H1 (cell line): ENCODE measurements at regions of chr15 and their contacts with region 1.

Region 1: DNA sequence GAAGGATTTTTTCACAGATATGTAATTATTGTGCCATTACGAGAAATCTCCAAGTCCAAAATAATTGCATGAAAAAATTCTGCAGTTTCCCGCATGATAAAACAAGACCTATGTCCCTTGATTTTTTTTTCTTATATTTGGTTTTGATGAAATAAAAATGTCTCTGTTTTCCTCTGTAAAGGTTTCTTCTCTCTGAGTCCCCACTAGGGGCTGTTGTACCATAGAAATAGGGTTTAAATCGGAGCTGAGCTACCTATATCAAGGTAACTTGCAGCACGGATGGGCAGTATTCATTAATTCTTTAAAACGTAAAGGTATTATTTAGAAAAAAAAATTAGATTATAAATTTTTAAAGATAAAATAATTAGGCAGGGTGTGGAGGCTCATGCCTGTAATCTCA is 66.6 kb upstream of the IGF1R start:
- DNase-seq: no peak
- H3K4me3 ChIP-seq: no peak overlapping the region
- H3K27ac ChIP-seq: no peak overlapping the region
- H3K4me1 ChIP-seq: peaks cover 0 to 5% (median 2%) of the 10 kb centered on the region in 4 experiments; a peak in 4 of 7 replicates
- H3K27me3 ChIP-seq: no peaks in the 10 kb centered on the region
- CTCF ChIP-seq: peak in 2 of 3 experiments; percentile 23 to 34; a peak in 2 of 4 replicates
- EP300 ChIP-seq: no peak
- POLR2A ChIP-seq: no peak
- RAD21 ChIP-seq: peak; percentile 45 to 52

Region 2: DNA sequence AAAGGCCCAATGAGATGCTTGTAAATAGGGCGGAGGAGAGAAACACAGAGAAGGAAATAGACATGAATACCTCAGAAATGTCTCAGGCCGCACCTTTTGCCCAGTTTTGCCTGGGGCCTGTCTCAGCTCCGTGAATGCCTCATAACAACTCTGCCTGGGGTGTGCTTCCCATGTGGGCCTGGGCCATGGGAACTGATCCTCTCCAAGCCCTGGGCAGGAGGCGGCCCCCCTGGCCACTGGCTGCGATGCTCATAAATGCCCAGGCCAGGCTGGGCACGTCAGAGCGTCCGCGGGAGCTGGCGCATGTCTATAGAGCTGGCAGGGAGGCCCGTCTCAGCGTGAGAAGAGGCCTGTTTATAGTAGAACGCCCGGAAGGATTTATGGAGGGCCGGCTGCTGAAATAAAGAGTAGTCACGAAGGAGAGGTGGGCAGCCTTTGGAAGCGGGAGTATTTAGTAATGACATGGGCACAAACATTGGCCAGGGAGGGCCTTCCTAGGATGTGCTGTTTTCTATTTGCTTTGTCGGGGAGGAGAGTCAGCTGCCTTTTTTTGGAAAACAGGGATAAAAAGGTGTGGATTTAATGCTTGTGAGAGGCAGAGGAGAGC is 19.3 kb before region 1 on chr15:
- CTCF ChIA-PET with region 1: interaction called, 32 read pairs
- POLR2A ChIA-PET with region 1: no interaction called
- DNase-seq: no peak
- H3K4me3 ChIP-seq: no peak overlapping the region
- H3K27ac ChIP-seq: no peak overlapping the region
- H3K4me1 ChIP-seq: peaks cover 0 to 2% (median 0%) of the 10 kb centered on the region in 4 experiments; a peak in 2 of 7 replicates
- H3K27me3 ChIP-seq: no peaks in the 10 kb centered on the region; a peak in 1 of 7 replicates
- CTCF ChIP-seq: no peak
- EP300 ChIP-seq: no peak
- POLR2A ChIP-seq: no peak
- RAD21 ChIP-seq: no peak

Region 3: GRCh38 chr15:98568382-98569017 is 13.2 kb before region 1 on chr15:
- CTCF ChIA-PET with region 1: interaction called, 32 read pairs
- POLR2A ChIA-PET with region 1: no interaction called
- DNase-seq: no peak
- H3K4me3 ChIP-seq: no peak overlapping the region
- H3K27ac ChIP-seq: no peak overlapping the region
- H3K4me1 ChIP-seq: no peaks in the 10 kb centered on the region
- H3K27me3 ChIP-seq: no peaks in the 10 kb centered on the region
- CTCF ChIP-seq: peak in 1 of 3 experiments; percentile 17; a peak in 1 of 4 replicates
- EP300 ChIP-seq: no peak
- POLR2A ChIP-seq: no peak
- RAD21 ChIP-seq: no peak

Region 4: DNA sequence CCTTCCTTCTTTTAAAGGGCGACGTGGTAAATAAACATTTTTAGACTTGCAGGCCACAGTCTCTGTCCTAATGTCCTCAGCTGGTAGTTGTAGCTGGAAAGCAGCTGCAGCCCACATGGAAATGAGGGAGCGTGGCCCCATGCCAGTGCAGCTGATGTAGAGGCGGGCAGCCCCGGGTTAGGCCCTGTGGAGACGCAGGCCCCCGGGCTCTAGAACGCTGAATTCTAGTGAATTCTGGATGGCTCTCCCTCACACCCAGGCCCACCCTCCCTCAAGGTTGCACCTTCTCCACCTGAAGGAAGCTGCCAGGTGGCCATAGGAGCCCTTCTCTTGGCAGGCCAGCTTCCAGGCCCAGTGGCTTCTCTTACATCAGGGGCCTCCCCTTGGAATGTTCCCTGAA is 373.7 kb after region 1 on chr15:
- CTCF ChIA-PET with region 1: no interaction called
- POLR2A ChIA-PET with region 1: no interaction called
- DNase-seq: no peak
- H3K4me3 ChIP-seq: no peak overlapping the region
- H3K27ac ChIP-seq: no peak overlapping the region
- H3K4me1 ChIP-seq: no peaks in the 10 kb centered on the region
- H3K27me3 ChIP-seq: no peaks in the 10 kb centered on the region
- CTCF ChIP-seq: no peak
- EP300 ChIP-seq: no peak
- POLR2A ChIP-seq: no peak
- RAD21 ChIP-seq: no peak